ENCODE measurements at regions of chr17 and their contacts with region 1.

Region 1: DNA sequence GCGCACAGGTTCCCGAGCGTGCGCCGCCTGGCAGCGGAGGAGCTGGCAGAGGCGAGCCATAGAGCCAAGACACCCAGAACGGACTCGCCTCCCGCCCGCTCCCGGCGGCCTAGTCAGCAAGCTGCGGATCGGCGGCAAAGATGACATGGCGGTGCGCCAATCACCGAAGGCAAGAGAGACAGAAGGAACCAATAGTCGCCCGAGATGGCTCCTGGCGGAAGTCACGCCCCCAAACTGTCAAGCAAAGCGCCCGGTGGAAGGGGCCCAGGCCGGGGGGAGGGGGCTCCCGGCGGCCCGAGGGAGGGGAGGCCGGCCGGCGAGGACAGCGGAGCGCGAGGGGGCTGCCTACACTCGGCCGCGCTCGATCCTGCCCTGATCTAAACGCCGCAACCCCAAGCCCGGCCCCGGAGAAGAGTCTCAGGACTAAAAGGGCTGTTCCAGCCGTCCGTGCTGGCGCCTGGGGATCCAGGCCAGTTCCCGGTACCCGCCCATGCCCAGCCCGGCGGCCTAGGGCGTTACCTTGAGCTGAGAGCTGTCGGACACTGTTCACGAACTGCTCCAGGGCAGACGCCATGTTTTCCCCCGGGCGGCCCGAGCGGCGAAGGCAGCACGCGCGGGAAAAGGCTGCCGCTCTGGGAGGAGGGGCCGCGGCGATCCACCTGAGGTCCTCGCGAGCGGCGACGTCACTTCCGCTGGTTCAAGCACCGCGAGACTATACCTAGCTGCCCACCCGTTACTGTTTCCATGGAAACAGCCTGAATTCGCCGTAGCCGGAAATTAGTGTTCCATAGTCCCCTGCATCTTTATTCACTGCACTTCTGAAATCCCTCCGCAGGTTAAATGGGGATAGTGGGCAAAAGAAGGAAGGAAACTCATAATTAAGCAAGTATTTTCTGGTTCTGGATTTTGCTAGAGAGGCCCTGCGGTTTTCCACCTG is at the start of gene COPS3:
- DNase-seq: peak; percentile 95
- H3K4me3 Mint-ChIP-seq: peak within 1 kb of the TSS; percentile 91
- H3K27ac Mint-ChIP-seq: peak within 1 kb of the TSS; percentile 94
- H3K4me1 Mint-ChIP-seq: peaks cover 36% of the 10 kb centered on the region
- H3K27me3 Mint-ChIP-seq: no peaks in the 10 kb centered on the region
- total RNA-seq, gene COPS3: 122 and 131 TPM in 2 replicates

Region 2: DNA sequence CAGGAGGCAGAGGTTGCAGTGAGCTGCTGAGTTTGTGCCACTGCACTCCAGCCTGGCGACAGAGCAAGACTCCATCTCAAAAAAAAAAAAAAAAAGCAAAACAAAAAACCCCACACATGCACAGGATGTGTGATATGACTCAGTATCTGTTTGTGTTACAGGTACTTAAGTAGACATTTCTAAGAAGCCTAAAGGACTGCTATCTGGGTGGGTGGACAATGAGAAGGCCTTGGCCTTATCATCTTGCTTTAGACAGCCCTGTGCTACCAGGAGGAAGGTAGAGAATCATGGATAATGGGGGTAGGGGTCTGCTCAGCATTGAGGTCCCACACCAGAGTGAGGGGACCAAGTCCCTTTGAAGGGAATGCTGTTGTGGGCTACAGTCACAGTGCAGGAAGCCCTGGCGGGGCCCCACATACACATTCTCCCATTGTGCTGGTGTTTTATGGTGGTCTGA is 101.5 kb before region 1 on chr17:
- intact Hi-C with region 1: loop called (anchors 1 kb)
- DNase-seq: peak; percentile 39
- H3K4me3 Mint-ChIP-seq: peak overlapping the region; percentile 84
- H3K27ac Mint-ChIP-seq: peak overlapping the region; percentile 97
- H3K4me1 Mint-ChIP-seq: peaks cover 76% of the 10 kb centered on the region
- H3K27me3 Mint-ChIP-seq: no peaks in the 10 kb centered on the region

Region 3: DNA sequence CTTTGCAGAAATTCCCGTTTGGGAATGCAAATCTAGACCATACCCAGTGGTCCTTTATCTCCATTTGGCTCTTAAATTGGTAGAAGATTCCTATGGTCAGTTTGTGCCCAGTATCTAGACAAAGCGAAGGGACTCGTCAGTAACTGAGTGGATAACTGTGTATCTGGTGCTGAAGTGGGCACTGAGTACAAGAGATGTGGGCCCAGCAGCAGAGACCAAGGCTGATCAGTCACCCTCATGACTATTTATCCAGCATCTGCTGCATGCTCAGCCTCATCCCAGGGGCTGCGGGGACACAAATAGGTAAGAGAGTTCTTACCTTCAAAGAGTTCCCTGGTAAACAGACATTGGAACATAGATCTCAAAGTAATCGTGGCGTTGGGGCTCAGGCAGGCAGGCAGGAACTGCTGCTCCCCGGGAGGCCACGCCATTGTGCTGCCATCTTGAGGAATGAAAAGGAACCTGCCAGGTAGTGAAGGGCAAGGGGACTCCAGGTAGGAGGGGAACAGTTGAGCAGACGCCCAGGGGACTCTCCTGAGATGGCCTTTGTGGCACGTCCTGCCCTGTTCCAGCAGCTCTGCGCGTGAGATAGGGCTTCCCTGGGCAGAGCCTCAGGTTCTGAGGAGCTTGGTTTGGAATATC is 32.6 kb after region 1 on chr17:
- intact Hi-C with region 1: loop called (anchors 1 kb)
- DNase-seq: peak; percentile 66
- H3K4me3 Mint-ChIP-seq: no peak overlapping the region
- H3K27ac Mint-ChIP-seq: no peak overlapping the region
- H3K4me1 Mint-ChIP-seq: peaks cover 6% of the 10 kb centered on the region
- H3K27me3 Mint-ChIP-seq: no peaks in the 10 kb centered on the region

Region 4: DNA sequence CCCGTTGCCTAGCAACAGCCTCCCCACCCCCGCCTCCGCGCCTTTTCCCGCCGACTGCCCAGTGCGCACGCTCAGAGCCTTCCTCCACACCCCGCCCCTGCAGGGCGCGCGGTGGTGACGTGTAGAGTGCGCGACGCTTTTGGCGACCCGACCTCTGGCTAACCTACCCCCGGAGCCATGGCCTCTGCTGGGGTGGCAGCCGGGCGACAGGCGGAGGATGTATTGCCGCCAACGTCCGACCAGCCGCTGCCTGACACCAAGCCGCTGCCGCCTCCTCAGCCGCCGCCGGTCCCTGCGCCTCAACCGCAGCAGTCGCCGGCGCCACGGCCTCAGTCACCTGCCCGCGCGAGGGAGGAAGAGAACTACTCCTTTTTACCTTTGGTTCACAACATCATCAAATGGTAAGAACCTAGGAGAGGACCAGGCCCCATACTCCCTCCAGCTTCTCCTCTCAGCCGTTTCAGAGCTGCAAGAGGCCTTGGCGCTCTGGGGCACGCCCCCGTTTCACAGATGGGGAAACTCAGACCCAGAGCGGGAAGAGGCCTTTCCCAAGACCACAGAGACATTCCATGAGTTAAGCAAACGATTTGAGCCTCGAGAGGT is 196.1 kb after region 1 on chr17 and contains the start of gene MED9:
- intact Hi-C with region 1: loop called (anchors 5 kb)
- DNase-seq: peak; percentile 91
- H3K4me3 Mint-ChIP-seq: peak within 1 kb of the TSS; percentile 95
- H3K27ac Mint-ChIP-seq: peak within 1 kb of the TSS; percentile 90
- H3K4me1 Mint-ChIP-seq: peaks cover 49% of the 10 kb centered on the region
- H3K27me3 Mint-ChIP-seq: peaks cover 16% of the 10 kb centered on the region
- total RNA-seq, gene MED9: 13.8 and 15.2 TPM in 2 replicates

Measured in activated T-helper 1 cell treated with anti-CD3 and anti-CD28 coated beads, Interleukin-12 subunit alpha, Interleukin-12 subunit beta, Interleukin-2, Interleukin-4 antibody, amounts not matched to agents 30 ng/mL and 10 ng/mL and 1 ng/mL, durations not matched to agents 14 hours and 24 hours and 36 hours (primary cell).